ENCODE measurements at regions of chr19 and their contacts with region 1.

Region 1: DNA sequence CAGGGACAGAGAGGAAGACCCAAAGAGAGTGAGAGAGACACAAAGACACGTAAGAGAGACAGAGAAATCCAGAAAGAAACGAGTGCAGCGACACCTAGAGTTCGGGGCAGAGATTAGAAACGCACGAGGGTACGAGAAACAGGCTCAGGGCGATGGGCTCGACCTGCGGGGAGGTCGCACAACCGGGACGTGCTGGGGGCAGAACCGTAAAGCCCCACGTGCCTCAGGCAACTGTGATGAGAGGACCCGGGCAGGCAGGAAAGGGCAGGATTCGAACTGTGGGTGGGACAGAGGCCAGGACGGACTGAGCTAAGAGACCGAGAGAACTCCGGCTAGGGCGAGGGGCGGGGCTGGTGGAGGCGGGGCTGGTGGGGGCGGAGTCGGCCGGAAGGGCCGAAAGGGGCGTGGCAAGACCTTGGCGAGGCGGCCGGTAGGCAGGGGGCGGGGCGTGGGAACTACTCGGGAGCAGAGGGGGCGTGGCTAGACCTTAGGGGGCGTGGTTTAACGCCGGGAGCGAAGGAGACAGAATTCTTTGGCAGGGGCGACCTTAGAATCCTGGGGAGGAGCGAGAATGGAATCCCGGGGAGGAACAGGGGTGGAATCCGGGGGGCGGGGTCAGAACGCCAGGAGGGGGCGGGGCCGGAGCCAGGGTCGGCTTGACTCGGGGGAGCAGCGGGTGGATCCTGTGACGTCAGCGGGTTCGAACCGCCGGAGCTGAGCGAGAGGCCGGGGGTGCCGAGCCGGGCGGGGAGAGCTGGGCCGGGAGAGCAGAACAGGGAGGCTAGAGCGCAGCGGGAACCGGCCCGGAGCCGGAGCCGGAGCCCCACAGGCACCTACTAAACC is at the start of gene NECTIN2:
- DNase-seq: peak; percentile 71
- total RNA-seq, gene NECTIN2: 126 and 154 TPM in 2 replicates

Region 2: GRCh38 chr19:44723952-44724319 is 121.9 kb before region 1 on chr19:
- in situ Hi-C with region 1: loop called (anchors 25 kb)
- DNase-seq: peak; percentile 60

Region 3: GRCh38 chr19:44777715-44778347 is 68.0 kb before region 1 on chr19 and contains the start of gene CBLC:
- in situ Hi-C with region 1: no loop called
- DNase-seq: no peak
- total RNA-seq, gene CBLC: not detected in 2 replicates

Region 4: GRCh38 chr19:45008552-45008951 is 162.7 kb after region 1 on chr19:
- in situ Hi-C with region 1: no loop called
- DNase-seq: no peak

Measured in G401 (cell line).